GM12878 (cell line): ENCODE measurements at regions of chr3 and their contacts with region 1.

Region 1: GRCh38 chr3:190217081-190217480 is 96.4 kb upstream of the P3H2 start:
- DNase-seq: no peak
- ATAC-seq: no peak
- H3K4me3 ChIP-seq: no peak overlapping the region
- H3K27ac ChIP-seq: no peak overlapping the region
- H3K4me1 ChIP-seq: no peaks in the 10 kb centered on the region
- H3K27me3 ChIP-seq: no peaks in the 10 kb centered on the region
- CTCF ChIP-seq: no peak
- EP300 ChIP-seq: no peak
- POLR2A ChIP-seq: no peak
- RAD21 ChIP-seq: no peak

Region 2: GRCh38 chr3:190205739-190206138 is 11.3 kb before region 1 on chr3:
- CTCF ChIA-PET with region 1: interaction called, 11 read pairs
- POLR2A ChIA-PET with region 1: interaction called, 6 read pairs
- RAD21 ChIA-PET with region 1: interaction called, 6 read pairs
- SMC1A ChIA-PET with region 1: interaction called, 9 read pairs
- in situ Hi-C with region 1: no loop called
- intact Hi-C with region 1: no loop called
- DNase-seq: peak; percentile 42
- ATAC-seq: peak; percentile 81
- H3K4me3 ChIP-seq: no peak overlapping the region
- H3K27ac ChIP-seq: 0 out of 2 replicates have a peak overlapping the region, but pooled peaks have one; percentile 6
- H3K4me1 ChIP-seq: peaks cover 6% of the 10 kb centered on the region
- H3K27me3 ChIP-seq: no peaks in the 10 kb centered on the region
- CTCF ChIP-seq: no peak
- EP300 ChIP-seq: peak in 1 of 2 experiments; percentile 75; a peak in 1 of 4 replicates
- POLR2A ChIP-seq: no peak
- RAD21 ChIP-seq: no peak